H1 (cell line): ENCODE measurements at regions of chr19 and their contacts with region 1.

Region 1: GRCh38 chr19:2475702-2476450 is at the start of gene GADD45B:
- DNase-seq: peak; percentile 90 to 97
- H3K4me3 ChIP-seq: peak within 1 kb of the TSS; percentile 56 to 81 (median 76)
- H3K27ac ChIP-seq: no peak within 1 kb of the TSS
- H3K4me1 ChIP-seq: peaks cover 0 to 14% (median 13%) of the 10 kb centered on the region in 4 experiments; a peak in 6 of 7 replicates
- H3K27me3 ChIP-seq: peaks cover 10 to 40% (median 34%) of the 10 kb centered on the region in 4 experiments
- CTCF ChIP-seq: no peak
- EP300 ChIP-seq: no peak
- POLR2A ChIP-seq: peak; percentile 100
- RAD21 ChIP-seq: no peak
- total RNA-seq, gene GADD45B: 11.0 and 11.4 TPM in 2 replicates

Region 2: DNA sequence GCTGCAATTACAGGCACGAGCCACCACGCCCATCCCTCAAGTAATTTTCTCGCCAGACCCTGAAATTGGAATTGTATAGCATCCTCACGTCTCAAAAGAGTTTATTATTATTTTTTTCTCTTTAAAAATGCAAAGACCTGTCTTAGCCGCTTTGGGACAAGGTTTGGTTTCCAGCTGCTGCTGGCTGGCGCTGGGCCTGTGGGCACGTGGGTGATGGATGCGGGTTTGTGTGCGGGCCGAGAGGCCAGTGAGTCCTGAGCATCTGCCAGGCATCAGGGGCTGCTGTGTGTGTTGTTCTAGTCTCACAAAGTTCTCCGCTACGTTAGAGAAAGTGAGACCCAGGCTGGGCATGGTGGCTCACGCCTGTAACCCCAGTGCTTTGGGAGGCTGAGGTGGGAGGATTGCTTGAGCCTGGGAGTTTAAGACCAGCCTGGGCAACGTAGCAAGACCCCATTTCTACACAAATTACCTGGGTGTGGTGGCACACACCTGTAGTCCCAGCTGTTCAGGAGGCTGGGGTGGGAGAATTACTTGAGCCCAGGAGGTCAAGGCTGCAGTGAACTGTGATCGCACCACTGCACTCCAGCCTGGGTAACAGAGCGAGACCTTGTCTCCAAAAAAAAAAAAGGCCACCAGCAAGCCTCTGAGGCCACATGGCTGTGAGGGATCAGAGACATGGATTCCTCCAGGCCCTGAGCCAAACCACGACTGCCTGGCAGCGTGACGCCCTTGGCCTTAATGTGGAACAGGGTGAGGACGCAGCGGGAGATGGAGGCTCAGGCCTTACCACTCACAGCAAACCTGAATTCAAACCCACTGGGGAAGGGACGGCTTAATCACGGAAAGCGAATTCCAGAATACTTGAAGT is 120.5 kb before region 1 on chr19:
- CTCF ChIA-PET with region 1: no interaction called
- POLR2A ChIA-PET with region 1: no interaction called
- DNase-seq: no peak
- H3K4me3 ChIP-seq: no peak overlapping the region
- H3K27ac ChIP-seq: no peak overlapping the region
- H3K4me1 ChIP-seq: peaks cover 0 to 3% (median 0%) of the 10 kb centered on the region in 4 experiments; a peak in 1 of 7 replicates
- H3K27me3 ChIP-seq: peaks cover 0 to 3% (median under 1%) of the 10 kb centered on the region in 4 experiments; a peak in 4 of 7 replicates
- CTCF ChIP-seq: no peak
- EP300 ChIP-seq: no peak
- POLR2A ChIP-seq: no peak
- RAD21 ChIP-seq: no peak

Region 3: DNA sequence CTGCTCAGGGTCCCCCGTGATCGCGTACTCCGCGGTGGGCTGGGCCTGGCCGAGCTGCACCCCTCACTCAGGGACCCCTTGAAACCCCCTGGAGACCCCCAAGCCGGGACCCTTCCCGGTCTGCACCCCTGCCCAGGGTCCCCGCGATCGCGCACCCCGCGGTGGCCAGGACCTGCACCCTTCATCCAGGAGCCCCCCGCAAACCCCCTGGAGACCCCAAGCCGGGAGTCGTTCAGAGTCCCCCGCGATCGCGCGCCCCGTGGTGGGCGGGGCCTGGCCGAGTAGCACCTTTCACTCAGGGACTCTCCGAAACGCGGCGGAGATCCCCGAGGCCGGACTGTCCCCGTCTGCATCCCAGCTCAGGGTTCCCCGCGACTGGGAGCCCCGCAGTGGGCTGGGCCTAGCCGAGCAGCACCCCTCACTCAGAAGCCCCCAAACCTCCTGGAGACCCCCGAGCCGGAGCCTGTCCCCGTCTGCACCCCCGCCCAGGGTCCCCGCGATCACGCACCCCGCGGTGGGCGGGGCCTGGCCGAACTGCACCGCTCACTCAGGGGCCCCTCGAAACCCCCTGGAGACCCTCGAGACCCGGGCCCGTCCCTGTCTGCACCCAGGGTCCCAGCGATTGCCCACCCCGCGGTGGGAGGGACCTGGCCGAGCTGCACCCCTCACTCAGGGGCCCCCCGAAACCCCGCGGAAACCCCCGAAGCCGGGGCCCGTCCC is 19.9 kb before region 1 on chr19:
- CTCF ChIA-PET with region 1: no interaction called
- POLR2A ChIA-PET with region 1: interaction called, 98 read pairs
- DNase-seq: no peak
- H3K4me3 ChIP-seq: peak overlapping the region; percentile 83 to 100 (median 85)
- H3K27ac ChIP-seq: no peak overlapping the region; the same call in 1 of the 2 replicates
- H3K4me1 ChIP-seq: peaks cover 0 to 5% (median 3%) of the 10 kb centered on the region in 4 experiments; a peak in 5 of 7 replicates
- H3K27me3 ChIP-seq: no peaks in the 10 kb centered on the region
- CTCF ChIP-seq: no peak
- EP300 ChIP-seq: no peak
- POLR2A ChIP-seq: 0 out of 3 replicates have a peak, but pooled peaks of 1 of the 2 experiments have one; percentile 3
- RAD21 ChIP-seq: no peak

Region 4: DNA sequence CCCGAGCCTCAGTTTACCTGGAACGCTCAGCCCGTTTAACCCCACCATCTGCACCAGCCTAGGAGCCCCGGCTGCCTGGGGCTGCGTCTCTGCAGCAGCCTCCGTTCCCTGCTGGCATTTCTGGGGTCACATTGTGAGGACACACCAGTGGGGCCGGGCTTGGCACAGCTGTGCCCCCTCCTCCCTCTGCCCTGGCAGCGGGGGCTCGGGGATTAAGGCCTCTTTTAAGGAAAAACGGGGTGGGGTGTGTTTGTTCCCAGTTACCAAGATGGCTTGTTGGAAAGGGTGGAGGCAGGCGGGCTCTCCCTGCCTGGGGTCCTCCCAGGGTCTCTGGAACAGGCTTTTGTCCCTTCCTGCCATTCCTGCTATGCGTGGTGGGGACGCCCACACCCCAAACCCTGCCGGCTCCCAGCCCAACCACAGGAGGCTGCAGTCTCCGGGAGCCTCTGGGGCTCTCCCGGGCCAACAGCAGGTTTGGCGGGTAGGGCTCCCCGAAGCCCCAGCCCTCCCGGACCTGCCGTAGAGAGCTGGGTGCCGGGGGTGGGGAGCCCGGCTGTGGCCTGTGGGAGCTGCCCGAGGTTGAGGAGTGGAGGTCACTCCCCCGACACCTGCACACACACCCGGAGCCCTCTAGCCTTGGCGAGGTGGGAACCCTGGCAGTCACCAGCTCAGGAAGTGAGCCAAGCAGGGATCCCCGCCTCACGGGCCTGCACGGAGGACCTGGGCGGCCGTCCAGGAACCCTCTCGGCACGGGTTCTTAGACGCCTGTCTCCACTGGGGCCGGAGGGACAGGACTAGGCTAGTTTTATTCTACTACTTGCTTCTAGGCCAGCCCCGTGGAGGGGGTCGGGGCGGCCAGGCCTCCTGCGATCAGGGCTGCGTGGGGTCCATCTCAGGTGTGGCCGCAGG is 36.9 kb after region 1 on chr19:
- CTCF ChIA-PET with region 1: interaction called, 7 read pairs
- POLR2A ChIA-PET with region 1: interaction called, 37 read pairs
- DNase-seq: no peak
- H3K4me3 ChIP-seq: no peak overlapping the region
- H3K27ac ChIP-seq: no peak overlapping the region
- H3K4me1 ChIP-seq: peaks cover 0 to 9% (median 6%) of the 10 kb centered on the region in 4 experiments; a peak in 5 of 7 replicates
- H3K27me3 ChIP-seq: no peaks in the 10 kb centered on the region
- CTCF ChIP-seq: no peak
- EP300 ChIP-seq: no peak
- POLR2A ChIP-seq: no peak
- RAD21 ChIP-seq: no peak

Region 5: DNA sequence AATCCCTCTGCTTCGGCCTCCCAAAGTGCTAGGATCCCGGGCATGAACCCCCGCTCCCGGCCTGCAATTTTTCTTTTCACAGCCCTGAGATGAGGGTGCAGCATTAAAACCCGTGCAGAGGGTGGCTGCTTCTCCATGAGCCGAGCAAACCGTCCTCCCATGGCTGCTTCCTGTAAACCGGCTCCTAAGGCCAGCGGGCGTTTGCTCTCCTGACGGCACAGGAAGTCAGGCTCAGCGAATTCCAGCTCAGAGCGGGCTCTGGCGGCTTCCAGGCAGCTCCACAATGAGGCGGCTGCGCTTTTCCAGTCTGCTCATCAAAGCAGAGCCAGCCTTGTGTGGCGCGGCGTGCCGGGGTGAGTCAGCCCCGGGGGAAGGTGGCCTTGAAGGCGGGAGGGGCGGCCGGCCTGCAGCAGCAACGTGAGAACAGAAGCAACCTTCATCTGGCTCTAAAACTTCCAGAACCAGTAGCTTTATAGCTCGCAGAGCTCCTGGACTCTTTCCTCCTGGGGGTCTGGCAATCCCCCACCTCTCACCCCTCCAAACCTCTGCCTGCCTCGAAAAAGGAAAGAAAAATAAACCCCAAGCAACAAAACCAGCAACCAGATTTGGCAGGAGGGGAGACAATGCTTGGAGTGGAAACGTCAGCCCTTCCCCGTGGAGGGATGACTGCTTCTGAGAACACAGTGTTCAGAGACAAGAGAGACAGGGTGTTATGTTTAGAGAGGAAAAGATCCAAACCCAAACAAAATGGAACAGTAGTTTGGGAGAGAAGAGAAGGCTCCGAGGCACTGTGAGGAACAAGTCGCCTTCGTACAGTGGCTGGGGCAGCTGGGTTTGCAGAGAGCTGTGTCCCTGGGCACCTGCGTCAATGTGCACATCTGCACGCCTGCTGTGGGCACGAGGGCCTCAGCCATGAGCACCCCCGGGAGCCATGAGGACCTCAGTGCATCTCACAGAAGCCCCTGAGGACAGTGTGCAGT is 67.9 kb after region 1 on chr19:
- CTCF ChIA-PET with region 1: interaction called, 9 read pairs
- POLR2A ChIA-PET with region 1: interaction called, 98 read pairs
- DNase-seq: peak; percentile 81 to 84
- H3K4me3 ChIP-seq: no peak overlapping the region; a peak in 1 of 8 replicates
- H3K27ac ChIP-seq: peak overlapping the region; percentile 40; the same call in 1 of the 2 replicates
- H3K4me1 ChIP-seq: peaks cover 3 to 26% (median 20%) of the 10 kb centered on the region in 4 experiments
- H3K27me3 ChIP-seq: no peaks in the 10 kb centered on the region; a peak in 2 of 7 replicates
- CTCF ChIP-seq: peak in 2 of 3 experiments; percentile 19 to 28; a peak in 2 of 4 replicates
- EP300 ChIP-seq: peak in 1 of 2 experiments; percentile 35; a peak in 1 of 3 replicates
- POLR2A ChIP-seq: peak in 1 of 2 experiments; percentile 81; a peak in 2 of 3 replicates
- RAD21 ChIP-seq: peak; percentile 27 to 53

Region 6: GRCh38 chr19:2588081-2588777 is 112.4 kb after region 1 on chr19:
- CTCF ChIA-PET with region 1: interaction called, 4 read pairs
- POLR2A ChIA-PET with region 1: interaction called, 37 read pairs
- DNase-seq: no peak
- H3K4me3 ChIP-seq: no peak overlapping the region
- H3K27ac ChIP-seq: no peak overlapping the region
- H3K4me1 ChIP-seq: peaks cover 3 to 16% (median 7%) of the 10 kb centered on the region in 4 experiments
- H3K27me3 ChIP-seq: peaks cover 0 to 3% (median 0%) of the 10 kb centered on the region in 4 experiments; a peak in 1 of 7 replicates
- CTCF ChIP-seq: no peak
- EP300 ChIP-seq: no peak
- POLR2A ChIP-seq: no peak
- RAD21 ChIP-seq: no peak

Region 7: GRCh38 chr19:2627319-2627829 is 151.5 kb after region 1 on chr19:
- CTCF ChIA-PET with region 1: interaction called, 4 read pairs
- POLR2A ChIA-PET with region 1: interaction called, 15 read pairs
- DNase-seq: no peak
- H3K4me3 ChIP-seq: no peak overlapping the region
- H3K27ac ChIP-seq: no peak overlapping the region
- H3K4me1 ChIP-seq: peaks cover 0 to 4% (median under 1%) of the 10 kb centered on the region in 4 experiments; a peak in 2 of 7 replicates
- H3K27me3 ChIP-seq: no peaks in the 10 kb centered on the region
- CTCF ChIP-seq: no peak
- EP300 ChIP-seq: no peak
- POLR2A ChIP-seq: no peak
- RAD21 ChIP-seq: no peak

Region 8: DNA sequence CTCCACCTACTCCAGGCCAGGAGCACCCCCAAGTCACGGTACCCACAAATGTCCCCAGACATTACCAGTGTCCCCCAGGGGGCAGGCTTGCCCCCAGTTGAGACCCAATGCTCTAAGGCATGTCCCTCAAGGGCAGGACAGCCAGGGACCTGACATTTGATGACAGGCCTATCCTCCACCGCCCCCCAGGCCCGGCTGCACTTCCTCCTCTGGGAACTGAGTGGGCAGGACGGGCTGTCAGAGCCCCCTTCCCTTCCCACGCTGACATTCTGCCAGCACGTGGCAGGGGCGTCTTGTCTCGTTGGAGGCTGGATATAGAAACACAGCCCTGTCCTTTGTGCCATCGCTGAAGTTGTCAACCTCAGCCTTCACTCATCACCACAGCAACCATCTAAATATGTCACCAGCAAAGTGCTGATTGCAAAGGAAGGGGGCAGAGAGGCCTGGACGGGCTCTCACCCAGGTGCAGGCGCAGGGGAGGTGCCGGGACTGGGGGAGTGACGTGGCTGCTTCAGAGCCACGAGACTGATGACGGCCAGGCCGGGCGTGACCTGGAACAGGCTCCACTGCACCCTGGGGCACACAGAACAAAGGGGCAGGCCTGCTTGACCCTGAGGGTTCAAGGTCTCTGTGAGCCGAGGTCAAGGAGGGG is 188.2 kb after region 1 on chr19:
- CTCF ChIA-PET with region 1: no interaction called
- POLR2A ChIA-PET with region 1: no interaction called
- DNase-seq: no peak
- H3K4me3 ChIP-seq: no peak overlapping the region
- H3K27ac ChIP-seq: no peak overlapping the region
- H3K4me1 ChIP-seq: no peaks in the 10 kb centered on the region
- H3K27me3 ChIP-seq: no peaks in the 10 kb centered on the region; a peak in 1 of 7 replicates
- CTCF ChIP-seq: peak; percentile 10 to 30 (median 16); a peak in 2 of 4 replicates
- EP300 ChIP-seq: no peak
- POLR2A ChIP-seq: no peak
- RAD21 ChIP-seq: peak in 1 of 2 experiments; percentile 25; a peak in 1 of 4 replicates